ENCODE measurements at regions of chr5 and their contacts with region 1.

Region 1: GRCh38 chr5:116361171-116361967 is 213.3 kb downstream of the SEMA6A start:
- DNase-seq: peak; percentile 33
- H3K4me3 ChIP-seq: peak overlapping the region in 1 of 2 donors; percentile 22
- H3K27ac ChIP-seq: peak overlapping the region in 1 of 2 donors; percentile 2
- H3K4me1 ChIP-seq: no peaks in the 10 kb centered on the region
- H3K27me3 ChIP-seq: no peaks in the 10 kb centered on the region
- CTCF ChIP-seq: peak in 1 of 4 experiments; percentile 22
- POLR2A ChIP-seq: no peak

Region 2: DNA sequence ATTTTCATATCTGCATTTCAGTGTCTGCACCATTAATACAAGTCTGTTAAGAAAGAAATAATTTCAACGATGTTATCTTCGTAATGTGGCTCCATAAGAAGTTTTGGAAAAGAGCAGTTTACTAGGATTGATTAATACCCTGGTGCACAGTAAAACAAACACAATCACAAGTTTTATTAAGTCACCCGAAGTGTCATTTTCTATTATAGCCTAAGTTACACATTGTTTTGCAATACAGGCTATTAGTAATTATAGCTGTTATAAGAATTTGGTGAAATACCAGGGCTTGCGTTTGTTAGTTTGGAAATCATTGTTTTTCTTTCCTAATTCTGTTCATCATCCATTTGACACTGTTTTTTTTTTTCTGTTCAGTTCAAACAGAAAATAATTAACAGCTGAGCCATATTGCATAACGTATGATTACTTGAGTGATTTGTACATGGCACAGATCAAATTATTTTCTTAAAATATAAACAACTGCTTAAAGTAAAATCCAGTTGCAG is 368.5 kb before region 1 on chr5:
- intact Hi-C with region 1: no loop called
- DNase-seq: no peak
- H3K4me3 ChIP-seq: no peak overlapping the region
- H3K27ac ChIP-seq: no peak overlapping the region
- H3K4me1 ChIP-seq: no peaks in the 10 kb centered on the region
- H3K27me3 ChIP-seq: no peaks in the 10 kb centered on the region
- CTCF ChIP-seq: no peak
- POLR2A ChIP-seq: no peak

Region 3: GRCh38 chr5:116395631-116396203 is 34.3 kb after region 1 on chr5:
- intact Hi-C with region 1: loop called (anchors 2 kb)
- DNase-seq: peak; percentile 8
- H3K4me3 ChIP-seq: no peak overlapping the region
- H3K27ac ChIP-seq: peak overlapping the region; percentile 20 to 50
- H3K4me1 ChIP-seq: no peaks in the 10 kb centered on the region
- H3K27me3 ChIP-seq: no peaks in the 10 kb centered on the region
- CTCF ChIP-seq: no peak
- POLR2A ChIP-seq: no peak

Region 4: GRCh38 chr5:116747881-116748280 is 386.5 kb after region 1 on chr5:
- intact Hi-C with region 1: no loop called
- DNase-seq: no peak
- H3K4me3 ChIP-seq: no peak overlapping the region
- H3K27ac ChIP-seq: no peak overlapping the region
- H3K4me1 ChIP-seq: no peaks in the 10 kb centered on the region
- H3K27me3 ChIP-seq: no peaks in the 10 kb centered on the region
- CTCF ChIP-seq: no peak
- POLR2A ChIP-seq: no peak

Measured in prostate gland (tissue), 2 donors.